Right cardiac atrium (tissue), 5 donors: ENCODE measurements at regions of chr4 and their contacts with region 1.

Region 1: GRCh38 chr4:86043755-86044592 is 315.9 kb downstream of the MAPK10 start:
- DNase-seq: no peak
- ATAC-seq: peak; percentile 62 to 76
- H3K4me3 ChIP-seq: no peak overlapping the region
- H3K27ac ChIP-seq: no peak overlapping the region
- H3K4me1 ChIP-seq: no peaks in the 10 kb centered on the region
- H3K27me3 ChIP-seq: no peaks in the 10 kb centered on the region

Region 2: DNA sequence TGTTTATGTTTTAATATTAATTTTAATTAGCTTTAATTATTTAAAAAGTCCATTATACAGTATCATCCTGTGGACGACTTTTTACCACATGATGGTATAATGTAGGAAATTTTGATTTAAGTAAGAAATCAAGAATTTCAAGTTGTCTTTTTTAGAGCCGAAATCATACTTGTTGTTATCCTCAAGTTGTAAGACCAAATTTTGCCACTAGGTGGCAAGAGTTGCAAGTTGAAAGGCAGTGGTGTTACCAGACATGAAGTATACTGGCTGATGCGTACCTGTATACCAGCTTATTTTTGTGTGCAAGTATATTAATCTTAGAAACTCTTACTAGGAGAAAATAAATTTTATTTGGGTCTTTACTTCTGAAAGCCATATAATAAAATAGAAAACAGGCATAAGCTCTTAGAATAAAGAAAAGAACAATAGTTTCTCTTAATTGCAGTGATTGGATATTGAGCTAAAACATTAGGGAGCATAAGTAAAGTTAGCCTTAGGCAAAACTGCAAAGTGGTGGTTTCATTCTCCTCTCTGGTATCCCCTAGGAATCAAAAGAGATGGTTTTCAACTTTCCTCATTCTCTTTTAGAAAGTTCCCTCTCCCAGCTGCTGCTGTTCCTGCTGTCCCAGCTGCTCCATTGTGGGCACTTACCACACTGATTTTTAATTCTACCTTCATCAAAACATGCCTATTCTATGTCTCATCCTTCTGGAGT is 959.4 kb before region 1 on chr4:
- intact Hi-C with region 1: loop called in 2 of 4 experiments (anchors 10 kb)
- DNase-seq: no peak
- ATAC-seq: peak; percentile 55 to 72
- H3K4me3 ChIP-seq: no peak overlapping the region
- H3K27ac ChIP-seq: no peak overlapping the region
- H3K4me1 ChIP-seq: no peaks in the 10 kb centered on the region
- H3K27me3 ChIP-seq: no peaks in the 10 kb centered on the region

Region 3: DNA sequence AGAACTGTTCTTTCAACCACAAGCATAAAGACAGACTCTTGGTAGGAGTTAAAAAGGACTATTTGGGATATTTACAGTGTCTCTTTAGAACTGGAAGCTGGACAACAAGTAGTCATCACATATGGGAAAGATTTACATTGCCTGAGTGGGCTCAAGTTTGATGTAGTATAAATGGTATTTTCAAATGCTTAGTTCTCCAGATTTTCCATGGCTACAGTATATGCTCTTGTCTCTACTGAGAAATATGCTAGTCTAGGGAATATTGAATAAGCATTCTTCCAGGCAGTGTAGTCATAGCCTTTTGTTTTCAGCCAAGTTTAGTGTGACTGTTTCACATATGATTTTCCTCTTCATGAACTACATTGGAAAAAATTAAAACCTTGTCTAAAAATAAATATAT is 253.4 kb before region 1 on chr4:
- intact Hi-C with region 1: loop called in 1 of 4 experiments (anchors 10 kb)
- DNase-seq: no peak
- ATAC-seq: no peak
- H3K4me3 ChIP-seq: no peak overlapping the region
- H3K27ac ChIP-seq: no peak overlapping the region
- H3K4me1 ChIP-seq: peaks cover 6% of the 10 kb centered on the region
- H3K27me3 ChIP-seq: no peaks in the 10 kb centered on the region

Region 4: GRCh38 chr4:85901500-85901899 is 142.5 kb before region 1 on chr4:
- intact Hi-C with region 1: no loop called
- DNase-seq: no peak
- ATAC-seq: no peak
- H3K4me3 ChIP-seq: no peak overlapping the region
- H3K27ac ChIP-seq: no peak overlapping the region
- H3K4me1 ChIP-seq: no peaks in the 10 kb centered on the region
- H3K27me3 ChIP-seq: no peaks in the 10 kb centered on the region